Activated T-helper 2 cell treated with anti-CD3 and anti-CD28 coated beads, Interferon-gamma antibody, Interleukin-2, Interleukin-4, amounts not matched to agents 10 μg/mL and 5 μg/mL and 100 μg/mL, durations not matched to agents 14 hours and 24 hours and 36 hours (primary cell): ENCODE measurements at regions of chr3 and their contacts with region 1.

Region 1: GRCh38 chr3:156643729-156644389 is 30.5 kb upstream of the TIPARP start:
- DNase-seq: peak; percentile 56
- H3K4me3 Mint-ChIP-seq: peak overlapping the region; percentile 50
- H3K27ac Mint-ChIP-seq: peak overlapping the region; percentile 78
- H3K4me1 Mint-ChIP-seq: peaks cover 29% of the 10 kb centered on the region
- H3K27me3 Mint-ChIP-seq: peaks cover 3% of the 10 kb centered on the region

Region 2: GRCh38 chr3:156664831-156665178 is 20.9 kb after region 1 on chr3:
- intact Hi-C with region 1: loop called (anchors 2 kb)
- DNase-seq: no peak
- H3K4me3 Mint-ChIP-seq: peak overlapping the region; percentile 2
- H3K27ac Mint-ChIP-seq: peak overlapping the region; percentile 12
- H3K4me1 Mint-ChIP-seq: peaks cover 59% of the 10 kb centered on the region
- H3K27me3 Mint-ChIP-seq: no peaks in the 10 kb centered on the region